Caco-2 (cell line): ENCODE measurements at regions of chr22 and their contacts with region 1.

Region 1: GRCh38 chr22:43346521-43346929 is 3.4 kb upstream of the SCUBE1 start:
- DNase-seq: peak; percentile 58 to 76
- H3K4me3 ChIP-seq: no peak overlapping the region
- H3K4me3 Mint-ChIP-seq: no peak overlapping the region
- H3K27ac Mint-ChIP-seq: no peak overlapping the region
- H3K4me1 ChIP-seq: no peaks in the 10 kb centered on the region
- H3K4me1 Mint-ChIP-seq: peaks cover 12% of the 10 kb centered on the region
- H3K27me3 ChIP-seq: peaks cover 3% of the 10 kb centered on the region; the same call in 1 of the 2 replicates
- H3K27me3 Mint-ChIP-seq: peaks cover 23% of the 10 kb centered on the region
- CTCF ChIP-seq: peak; percentile 73 to 79

Region 2: GRCh38 chr22:43273902-43274484 is 72.5 kb before region 1 on chr22:
- CTCF ChIA-PET with region 1: interaction called, 99 read pairs
- POLR2A ChIA-PET with region 1: no interaction called
- intact Hi-C with region 1: loop called (anchors 1 kb)
- DNase-seq: peak; percentile 67 to 77
- H3K4me3 ChIP-seq: no peak overlapping the region
- H3K4me3 Mint-ChIP-seq: no peak overlapping the region
- H3K27ac Mint-ChIP-seq: no peak overlapping the region
- H3K4me1 ChIP-seq: no peaks in the 10 kb centered on the region
- H3K4me1 Mint-ChIP-seq: no peaks in the 10 kb centered on the region
- H3K27me3 ChIP-seq: no peaks in the 10 kb centered on the region; the same call in 1 of the 2 replicates
- H3K27me3 Mint-ChIP-seq: peaks cover 4% of the 10 kb centered on the region
- CTCF ChIP-seq: peak; percentile 77 to 78

Region 3: DNA sequence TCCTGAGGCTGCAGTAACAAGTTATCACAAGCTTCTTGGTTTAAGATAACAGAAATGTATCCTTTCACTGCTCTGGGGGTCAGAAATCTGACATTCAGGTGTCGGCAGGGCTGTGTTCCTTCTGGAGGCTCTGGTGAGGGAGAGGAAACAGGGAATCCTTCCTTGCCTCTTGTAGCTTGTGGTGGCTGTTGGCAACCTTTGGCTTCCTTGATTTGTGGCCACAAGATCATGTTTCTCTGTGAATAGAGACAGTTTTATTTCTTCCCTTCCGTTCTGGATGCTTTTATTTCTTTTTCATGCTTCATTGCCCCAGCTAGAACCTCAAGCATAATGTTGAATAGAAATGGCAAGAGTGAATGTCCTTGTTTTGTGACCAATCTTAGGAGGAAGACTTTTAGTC is 109.3 kb after region 1 on chr22:
- CTCF ChIA-PET with region 1: no interaction called
- POLR2A ChIA-PET with region 1: no interaction called
- intact Hi-C with region 1: no loop called
- DNase-seq: peak in 1 of 2 experiments; percentile 1
- H3K4me3 ChIP-seq: no peak overlapping the region
- H3K4me3 Mint-ChIP-seq: no peak overlapping the region
- H3K27ac Mint-ChIP-seq: no peak overlapping the region
- H3K4me1 ChIP-seq: no peaks in the 10 kb centered on the region
- H3K4me1 Mint-ChIP-seq: no peaks in the 10 kb centered on the region
- H3K27me3 ChIP-seq: no peaks in the 10 kb centered on the region
- H3K27me3 Mint-ChIP-seq: peaks cover 22% of the 10 kb centered on the region
- CTCF ChIP-seq: no peak